ENCODE measurements at regions of chr6 and their contacts with region 1.

Region 1: DNA sequence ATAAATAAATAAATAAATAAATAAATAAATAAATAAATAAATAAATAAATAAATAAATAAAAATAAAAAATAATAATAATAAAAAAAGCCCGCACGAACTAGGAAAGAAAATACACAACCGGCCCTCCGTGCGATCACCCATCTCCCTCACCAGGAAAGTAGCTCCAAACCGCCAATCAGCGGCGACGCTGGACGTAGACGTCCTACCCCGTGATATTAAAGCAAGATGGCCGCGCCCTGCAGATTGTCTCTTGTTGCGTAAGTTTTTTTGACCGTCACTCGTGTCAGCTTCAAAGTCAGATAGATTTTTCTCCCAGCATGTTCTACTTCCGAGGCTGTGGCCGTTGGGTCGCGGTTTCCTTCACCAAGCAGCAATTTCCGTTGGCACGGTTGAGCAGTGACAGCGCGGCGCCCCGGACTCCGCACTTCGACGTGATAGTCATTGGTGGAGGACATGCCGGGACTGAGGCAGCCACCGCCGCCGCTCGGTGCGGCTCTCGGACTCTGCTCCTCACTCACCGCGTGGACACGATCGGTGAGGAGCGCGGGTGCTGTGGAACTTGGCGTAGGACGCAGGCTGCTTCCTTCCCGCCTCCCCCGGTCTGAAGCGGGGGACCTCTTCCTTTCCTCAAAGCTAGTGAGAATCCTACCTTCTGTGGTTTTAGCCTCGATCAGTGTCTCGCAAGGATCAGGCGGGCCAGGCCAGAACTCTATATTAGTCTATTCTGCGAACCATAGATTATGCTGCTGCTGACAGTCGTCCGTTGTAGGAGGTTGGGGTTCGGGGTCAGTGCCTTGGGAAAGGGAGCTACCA is at the start of gene MTO1:
- DNase-seq: peak; percentile 94
- ATAC-seq: peak; percentile 93
- H3K4me3 Mint-ChIP-seq: peak within 1 kb of the TSS; percentile 91
- H3K27ac Mint-ChIP-seq: peak within 1 kb of the TSS; percentile 99
- H3K4me1 Mint-ChIP-seq: peaks cover 38% of the 10 kb centered on the region
- H3K27me3 Mint-ChIP-seq: no peaks in the 10 kb centered on the region
- CTCF ChIP-seq: no peak
- total RNA-seq, gene MTO1: 42.1 to 43.2 TPM

Region 2: GRCh38 chr6:73451223-73452107 is 10.3 kb before region 1 on chr6:
- CTCF ChIA-PET with region 1: interaction called, 5 read pairs
- POLR2A ChIA-PET with region 1: interaction called, 61 read pairs
- intact Hi-C with region 1: no loop called
- DNase-seq: peak; percentile 62
- ATAC-seq: peak; percentile 52
- H3K4me3 Mint-ChIP-seq: peak overlapping the region; percentile 93
- H3K27ac Mint-ChIP-seq: peak overlapping the region; percentile 91
- H3K4me1 Mint-ChIP-seq: peaks cover 17% of the 10 kb centered on the region
- H3K27me3 Mint-ChIP-seq: no peaks in the 10 kb centered on the region
- CTCF ChIP-seq: no peak

Region 3: DNA sequence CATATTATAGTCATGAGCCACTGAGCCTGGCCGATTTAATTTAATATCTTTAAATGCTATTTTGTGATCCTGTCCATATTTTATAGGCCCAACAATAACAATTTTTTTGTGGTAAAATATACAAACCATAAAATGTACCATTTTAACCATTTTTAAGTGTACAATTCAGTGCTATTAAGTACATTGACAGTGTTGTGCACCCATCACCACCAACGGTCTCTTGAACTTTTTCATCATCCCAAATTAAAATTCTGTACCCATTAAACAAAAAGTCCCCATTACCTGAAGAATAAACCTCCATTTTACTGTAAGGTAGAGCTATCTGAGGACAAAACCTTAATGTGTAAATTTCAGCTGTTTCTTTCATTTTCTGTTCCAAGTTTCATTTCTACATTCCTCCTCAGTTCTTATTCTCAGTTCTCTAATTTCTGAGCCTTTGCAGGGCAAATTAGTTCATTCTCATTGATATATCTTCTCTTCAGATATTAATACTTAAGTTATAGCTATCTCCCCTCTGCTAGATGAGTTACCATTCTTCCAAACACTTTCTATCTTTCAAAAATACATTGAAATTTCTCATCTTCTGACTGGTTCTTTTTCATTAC is 10.0 kb after region 1 on chr6:
- CTCF ChIA-PET with region 1: interaction called, 5 read pairs
- POLR2A ChIA-PET with region 1: interaction called, 22 read pairs
- intact Hi-C with region 1: no loop called
- DNase-seq: no peak
- ATAC-seq: no peak
- H3K4me3 Mint-ChIP-seq: no peak overlapping the region
- H3K27ac Mint-ChIP-seq: peak overlapping the region; percentile 76
- H3K4me1 Mint-ChIP-seq: peaks cover 17% of the 10 kb centered on the region
- H3K27me3 Mint-ChIP-seq: no peaks in the 10 kb centered on the region
- CTCF ChIP-seq: no peak

Region 4: DNA sequence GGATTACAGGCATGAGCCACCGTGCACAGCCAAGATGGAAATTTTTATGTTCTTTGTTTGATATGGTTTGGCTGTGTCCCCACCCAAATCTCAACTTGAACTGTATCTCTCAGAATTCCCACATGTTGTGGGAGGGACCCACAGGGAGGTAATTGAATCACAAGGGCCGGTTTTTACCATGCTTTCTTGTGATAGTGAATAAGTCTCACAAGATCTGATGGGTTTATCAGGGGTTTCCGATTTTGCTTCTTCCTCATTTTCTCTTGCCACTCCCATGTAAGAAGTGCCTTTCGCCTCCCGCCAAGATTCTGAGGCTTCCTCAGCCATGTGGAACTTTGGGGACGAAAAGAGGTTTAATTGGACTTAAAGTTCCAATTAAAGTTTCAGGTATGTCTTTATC is 44.5 kb after region 1 on chr6:
- CTCF ChIA-PET with region 1: no interaction called
- POLR2A ChIA-PET with region 1: interaction called, 5 read pairs
- intact Hi-C with region 1: loop called (anchors 5 kb)
- DNase-seq: no peak
- ATAC-seq: no peak
- H3K4me3 Mint-ChIP-seq: no peak overlapping the region
- H3K27ac Mint-ChIP-seq: no peak overlapping the region
- H3K4me1 Mint-ChIP-seq: no peaks in the 10 kb centered on the region
- H3K27me3 Mint-ChIP-seq: no peaks in the 10 kb centered on the region
- CTCF ChIP-seq: no peak

Region 5: GRCh38 chr6:73564578-73565345 is 103.0 kb after region 1 on chr6:
- CTCF ChIA-PET with region 1: no interaction called
- POLR2A ChIA-PET with region 1: no interaction called
- intact Hi-C with region 1: no loop called
- DNase-seq: peak; percentile 36
- ATAC-seq: no peak
- H3K4me3 Mint-ChIP-seq: no peak overlapping the region
- H3K27ac Mint-ChIP-seq: no peak overlapping the region
- H3K4me1 Mint-ChIP-seq: peaks cover 9% of the 10 kb centered on the region
- H3K27me3 Mint-ChIP-seq: no peaks in the 10 kb centered on the region
- CTCF ChIP-seq: no peak

Region 6: DNA sequence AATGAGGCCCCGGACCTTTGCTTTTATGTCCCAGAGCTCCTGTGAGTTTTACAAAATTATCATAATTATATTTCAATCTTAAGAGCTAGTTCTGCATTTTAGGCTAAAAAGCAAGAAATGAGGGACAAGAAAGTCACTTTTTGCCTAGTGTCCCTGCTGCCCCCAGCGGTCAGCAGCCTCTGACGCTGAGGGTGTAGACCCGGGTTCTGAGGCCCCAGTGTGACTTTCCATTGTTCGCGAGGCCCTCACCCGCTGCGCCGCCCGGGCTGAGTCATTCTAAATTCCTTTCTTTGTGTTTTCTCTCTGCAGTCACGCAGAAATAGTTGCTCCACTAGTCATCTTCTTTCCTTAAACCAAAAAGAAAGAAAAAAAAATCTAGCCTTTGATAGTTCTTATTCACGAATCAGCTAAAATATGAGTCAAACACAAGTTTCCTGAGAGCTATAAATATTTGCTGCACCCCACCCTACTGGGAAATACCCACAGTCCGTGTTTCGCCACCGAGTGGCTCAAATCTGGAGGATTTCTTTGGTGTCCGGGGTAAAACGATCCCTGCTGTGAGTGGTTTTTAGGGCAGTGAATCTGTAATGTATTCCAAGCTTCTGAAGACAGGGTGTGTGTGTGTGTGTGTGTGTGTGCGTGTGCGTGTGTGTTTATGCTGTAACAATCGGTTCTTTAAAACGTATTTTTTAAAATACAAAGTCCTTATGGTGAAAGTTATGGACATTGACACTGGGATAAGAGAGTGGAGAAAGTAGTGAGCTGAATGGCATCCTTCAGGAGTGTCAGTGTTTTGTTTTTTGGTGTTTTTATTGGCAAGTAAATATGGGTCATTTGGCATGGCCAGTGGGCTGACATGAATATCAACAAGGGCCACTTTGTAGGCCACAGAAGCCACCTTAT is 118.8 kb after region 1 on chr6:
- CTCF ChIA-PET with region 1: interaction called, 4 read pairs
- POLR2A ChIA-PET with region 1: interaction called, 14 read pairs
- intact Hi-C with region 1: no loop called
- DNase-seq: peak; percentile 89
- ATAC-seq: peak; percentile 90
- H3K4me3 Mint-ChIP-seq: peak overlapping the region; percentile 69
- H3K27ac Mint-ChIP-seq: peak overlapping the region; percentile 99
- H3K4me1 Mint-ChIP-seq: peaks cover 28% of the 10 kb centered on the region
- H3K27me3 Mint-ChIP-seq: no peaks in the 10 kb centered on the region
- CTCF ChIP-seq: no peak

Region 7: GRCh38 chr6:73653571-73654424 is 192.1 kb after region 1 on chr6 and contains the start of gene SLC17A5:
- CTCF ChIA-PET with region 1: interaction called, 5 read pairs
- POLR2A ChIA-PET with region 1: interaction called, 15 read pairs
- intact Hi-C with region 1: no loop called
- DNase-seq: peak; percentile 92
- ATAC-seq: peak; percentile 89
- H3K4me3 Mint-ChIP-seq: peak within 1 kb of the TSS; percentile 87
- H3K27ac Mint-ChIP-seq: peak within 1 kb of the TSS; percentile 92
- H3K4me1 Mint-ChIP-seq: peaks cover 31% of the 10 kb centered on the region
- H3K27me3 Mint-ChIP-seq: no peaks in the 10 kb centered on the region
- CTCF ChIP-seq: no peak
- total RNA-seq, gene SLC17A5: 4.2 to 5.0 TPM

Region 8: DNA sequence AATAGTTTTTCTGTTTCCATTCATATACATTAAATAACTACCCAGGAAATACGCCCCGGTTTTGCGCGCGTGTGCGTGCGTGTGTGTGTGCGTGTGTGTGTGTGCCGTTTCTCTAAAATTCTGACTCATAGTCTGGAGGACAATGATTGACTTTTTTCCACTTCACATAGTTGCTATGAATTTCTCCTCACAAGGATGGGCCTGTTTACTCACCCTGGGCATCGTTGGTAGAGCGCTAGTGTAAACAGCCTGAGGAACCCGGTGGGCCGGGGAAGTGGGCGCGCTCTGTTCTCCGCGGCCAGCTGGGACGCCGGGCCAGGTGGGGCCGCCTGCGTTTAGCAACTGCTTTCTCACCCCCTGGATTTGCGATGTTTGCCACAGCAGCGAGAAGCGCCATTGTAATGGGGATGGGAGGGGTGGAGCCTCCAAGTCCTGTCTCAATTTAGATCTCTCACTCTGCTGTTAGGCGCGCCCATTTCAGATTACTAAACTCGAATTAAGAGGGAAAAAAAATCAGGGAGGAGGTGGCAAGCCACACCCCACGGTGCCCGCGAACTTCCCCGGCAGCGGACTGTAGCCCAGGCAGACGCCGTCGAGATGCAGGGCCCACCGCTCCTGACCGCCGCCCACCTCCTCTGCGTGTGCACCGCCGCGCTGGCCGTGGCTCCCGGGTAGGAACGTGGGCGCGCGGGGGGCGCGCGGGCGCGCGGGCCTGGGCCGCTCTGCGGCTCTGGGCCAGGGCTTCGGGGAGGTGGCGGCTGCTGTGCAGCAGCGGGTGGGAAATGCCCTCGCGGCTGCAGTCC is 234.1 kb after region 1 on chr6 and contains the start of gene CD109:
- CTCF ChIA-PET with region 1: no interaction called
- POLR2A ChIA-PET with region 1: no interaction called
- intact Hi-C with region 1: no loop called
- DNase-seq: peak; percentile 86
- ATAC-seq: peak; percentile 87
- H3K4me3 Mint-ChIP-seq: peak within 1 kb of the TSS; percentile 95
- H3K27ac Mint-ChIP-seq: peak within 1 kb of the TSS; percentile 98
- H3K4me1 Mint-ChIP-seq: peaks cover 41% of the 10 kb centered on the region
- H3K27me3 Mint-ChIP-seq: peaks cover 32% of the 10 kb centered on the region
- CTCF ChIP-seq: no peak
- total RNA-seq, gene CD109: 9.5 to 10.6 TPM

Measured in activated CD8-positive, alpha-beta T cell treated with anti-CD3 and anti-CD28 coated beads for 36 hours (primary cell).